ENCODE measurements at regions of chr7 and their contacts with region 1.

Region 1: DNA sequence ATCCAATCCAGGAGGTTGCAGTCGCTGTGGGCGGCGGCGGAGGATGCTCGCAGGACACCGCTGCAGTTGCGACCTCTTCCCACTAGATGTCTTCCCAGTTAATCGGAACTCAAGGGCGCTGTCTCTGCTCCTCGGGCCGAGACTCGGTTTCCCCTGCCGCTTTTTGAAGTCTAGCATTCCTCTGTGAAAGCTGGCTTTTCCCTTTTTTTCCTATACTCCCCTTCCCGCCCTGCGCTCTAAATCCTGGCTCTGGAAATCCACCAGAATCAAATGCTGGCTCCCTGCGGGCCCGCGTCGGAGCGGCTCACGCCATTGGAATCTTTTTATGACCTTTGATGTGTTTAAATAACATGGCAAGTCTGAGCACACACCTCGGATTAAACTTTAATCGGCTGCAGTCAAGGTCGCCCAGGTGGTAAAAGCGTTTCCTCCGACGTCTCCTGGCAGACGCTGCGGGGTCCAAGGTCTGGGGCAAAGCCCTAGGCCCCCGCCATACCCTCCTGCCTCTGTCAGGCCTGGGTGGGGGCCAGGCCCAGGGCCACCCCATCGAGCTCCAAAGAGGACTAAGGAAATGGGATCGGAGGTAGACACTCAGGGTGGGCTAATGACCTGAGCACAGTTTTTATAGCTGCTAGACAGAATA is 10.7 kb upstream of the HOXA13 start:
- DNase-seq: no peak
- ATAC-seq: peak; percentile 49
- H3K4me3 Mint-ChIP-seq: peak overlapping the region; percentile 64
- H3K27ac Mint-ChIP-seq: no peak overlapping the region
- H3K4me1 Mint-ChIP-seq: peaks cover 14% of the 10 kb centered on the region
- H3K27me3 Mint-ChIP-seq: peaks cover 75% of the 10 kb centered on the region
- CTCF ChIP-seq: no peak

Region 2: DNA sequence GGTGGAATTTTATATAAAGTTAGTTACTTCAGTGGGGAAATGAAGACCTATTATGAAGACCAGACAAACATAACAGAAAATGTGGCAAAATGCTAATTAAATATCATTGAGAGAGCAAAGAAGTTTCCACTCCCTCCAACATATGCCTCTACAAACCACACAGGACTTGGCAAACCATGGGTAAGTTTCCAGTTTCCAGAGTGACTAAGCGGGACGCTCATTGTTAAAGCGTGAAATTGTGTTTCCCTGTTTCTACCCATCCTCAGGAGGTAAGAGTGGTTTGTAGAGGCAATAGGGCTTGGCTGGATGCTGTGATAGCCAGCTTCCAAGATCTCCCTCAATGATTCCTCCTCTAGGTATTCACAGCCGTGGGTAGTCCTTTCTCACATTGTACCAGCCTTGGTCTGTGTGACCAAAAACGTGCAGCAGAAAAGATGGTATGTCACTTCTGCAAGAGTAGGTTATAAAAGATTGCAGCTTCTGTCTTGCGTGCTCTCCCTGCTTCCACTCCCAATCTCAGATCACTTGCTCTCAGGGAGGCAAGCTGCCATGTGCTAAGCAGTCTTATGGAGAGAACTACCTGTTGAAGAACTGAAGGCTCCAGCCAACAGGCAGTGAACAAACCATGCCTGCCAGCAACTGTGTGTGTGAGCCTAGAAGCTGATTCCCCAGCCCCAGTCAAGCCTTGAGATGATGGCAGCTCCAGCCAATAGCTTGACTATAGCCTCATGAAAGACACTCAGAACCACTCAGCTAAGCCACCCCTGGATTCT is 973.3 kb before region 1 on chr7:
- CTCF ChIA-PET with region 1: no interaction called
- POLR2A ChIA-PET with region 1: no interaction called
- intact Hi-C with region 1: no loop called
- DNase-seq: no peak
- ATAC-seq: no peak
- H3K4me3 Mint-ChIP-seq: no peak overlapping the region
- H3K27ac Mint-ChIP-seq: no peak overlapping the region
- H3K4me1 Mint-ChIP-seq: no peaks in the 10 kb centered on the region
- H3K27me3 Mint-ChIP-seq: peaks cover 1% of the 10 kb centered on the region
- CTCF ChIP-seq: no peak

Region 3: GRCh38 chr7:27160546-27161213 is 49.9 kb before region 1 on chr7:
- CTCF ChIA-PET with region 1: no interaction called
- POLR2A ChIA-PET with region 1: no interaction called
- intact Hi-C with region 1: no loop called
- DNase-seq: peak; percentile 83
- ATAC-seq: peak; percentile 87
- H3K4me3 Mint-ChIP-seq: peak overlapping the region; percentile 75
- H3K27ac Mint-ChIP-seq: no peak overlapping the region
- H3K4me1 Mint-ChIP-seq: peaks cover 31% of the 10 kb centered on the region
- H3K27me3 Mint-ChIP-seq: peaks cover 72% of the 10 kb centered on the region
- CTCF ChIP-seq: peak; percentile 97

Region 4: DNA sequence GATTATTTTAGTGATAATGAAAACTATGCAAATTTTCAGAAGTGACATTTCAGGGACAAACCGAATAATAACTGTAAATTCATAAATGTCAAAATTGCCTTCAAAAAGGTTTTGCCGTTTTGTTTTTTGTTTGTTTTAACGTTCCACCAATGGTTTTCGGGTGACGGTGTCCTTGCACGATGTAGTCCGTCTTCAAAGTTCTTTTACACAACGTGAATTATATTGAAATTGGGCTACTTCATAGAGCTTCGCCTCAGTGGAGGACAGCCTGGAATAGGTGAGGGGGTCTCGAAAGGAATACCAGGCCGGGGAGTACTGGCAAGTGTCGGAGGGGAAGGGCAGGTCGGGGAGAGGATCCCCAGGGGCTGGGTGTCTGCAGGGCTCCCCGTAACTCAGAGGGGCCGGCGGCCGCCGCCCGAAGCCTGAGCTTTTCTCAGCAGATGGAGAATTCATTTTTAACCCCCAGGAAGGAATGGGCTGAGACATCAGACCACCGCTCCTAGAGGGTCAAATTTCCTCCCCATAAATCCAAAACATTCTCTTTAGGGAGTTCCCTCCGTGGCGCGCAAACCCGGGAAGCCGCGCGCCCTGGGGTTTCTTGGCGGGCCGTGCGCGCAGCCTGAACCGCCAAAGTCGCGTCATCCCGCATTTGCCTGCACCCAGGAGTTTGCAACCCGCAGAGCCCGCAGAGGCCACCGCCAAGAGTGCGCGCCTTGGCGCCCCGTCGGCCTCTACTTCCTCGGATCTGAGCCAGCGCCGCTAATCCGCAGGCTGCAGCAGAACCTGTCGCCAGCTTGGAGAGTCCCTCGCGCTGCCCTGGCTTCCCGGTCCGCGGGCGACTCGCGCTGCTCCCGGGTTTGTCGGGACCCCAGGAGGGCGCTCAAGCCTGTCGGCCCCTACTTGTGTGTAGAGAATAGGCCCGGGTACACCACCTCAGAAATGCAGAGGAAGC is 14.7 kb after region 1 on chr7:
- CTCF ChIA-PET with region 1: interaction called, 4 read pairs
- POLR2A ChIA-PET with region 1: no interaction called
- intact Hi-C with region 1: loop called (anchors 2 kb)
- DNase-seq: no peak
- ATAC-seq: no peak
- H3K4me3 Mint-ChIP-seq: no peak overlapping the region
- H3K27ac Mint-ChIP-seq: no peak overlapping the region
- H3K4me1 Mint-ChIP-seq: peaks cover 10% of the 10 kb centered on the region
- H3K27me3 Mint-ChIP-seq: peaks cover 57% of the 10 kb centered on the region
- CTCF ChIP-seq: no peak

Region 5: GRCh38 chr7:27576360-27576944 is 365.9 kb after region 1 on chr7:
- CTCF ChIA-PET with region 1: interaction called, 8 read pairs
- POLR2A ChIA-PET with region 1: no interaction called
- intact Hi-C with region 1: loop called (anchors 1 kb)
- DNase-seq: no peak
- ATAC-seq: no peak
- H3K4me3 Mint-ChIP-seq: no peak overlapping the region
- H3K27ac Mint-ChIP-seq: no peak overlapping the region
- H3K4me1 Mint-ChIP-seq: no peaks in the 10 kb centered on the region
- H3K27me3 Mint-ChIP-seq: no peaks in the 10 kb centered on the region
- CTCF ChIP-seq: peak; percentile 26

Region 6: DNA sequence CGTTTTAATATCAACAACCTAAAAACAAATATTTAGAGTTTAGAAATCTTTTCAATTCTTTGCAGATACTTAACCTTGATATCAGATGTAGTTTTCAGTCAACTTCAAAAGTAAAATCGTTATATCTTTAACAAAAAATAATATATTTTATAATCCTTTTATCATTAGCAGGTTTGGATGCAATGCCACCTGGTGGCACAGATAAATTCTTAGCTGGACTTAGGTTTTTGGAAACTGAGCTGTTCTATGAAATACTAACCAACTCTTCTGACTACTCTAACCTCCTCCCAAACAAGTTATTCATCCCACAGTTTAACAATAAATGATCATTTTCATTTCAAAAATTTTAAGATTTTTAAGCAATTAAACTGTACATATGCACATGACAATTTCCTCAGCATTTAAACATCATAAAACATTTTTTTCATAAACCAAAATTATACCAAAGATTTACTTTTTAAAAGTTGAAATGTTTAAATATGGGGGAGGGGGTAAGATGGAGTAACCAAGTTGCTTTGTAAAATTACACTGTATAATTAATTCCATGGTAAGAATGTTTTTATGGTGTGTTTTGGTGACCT is 395.2 kb after region 1 on chr7:
- CTCF ChIA-PET with region 1: no interaction called
- POLR2A ChIA-PET with region 1: no interaction called
- intact Hi-C with region 1: loop called (anchors 1 kb)
- DNase-seq: no peak
- ATAC-seq: no peak
- H3K4me3 Mint-ChIP-seq: no peak overlapping the region
- H3K27ac Mint-ChIP-seq: no peak overlapping the region
- H3K4me1 Mint-ChIP-seq: no peaks in the 10 kb centered on the region
- H3K27me3 Mint-ChIP-seq: no peaks in the 10 kb centered on the region
- CTCF ChIP-seq: no peak

Region 7: DNA sequence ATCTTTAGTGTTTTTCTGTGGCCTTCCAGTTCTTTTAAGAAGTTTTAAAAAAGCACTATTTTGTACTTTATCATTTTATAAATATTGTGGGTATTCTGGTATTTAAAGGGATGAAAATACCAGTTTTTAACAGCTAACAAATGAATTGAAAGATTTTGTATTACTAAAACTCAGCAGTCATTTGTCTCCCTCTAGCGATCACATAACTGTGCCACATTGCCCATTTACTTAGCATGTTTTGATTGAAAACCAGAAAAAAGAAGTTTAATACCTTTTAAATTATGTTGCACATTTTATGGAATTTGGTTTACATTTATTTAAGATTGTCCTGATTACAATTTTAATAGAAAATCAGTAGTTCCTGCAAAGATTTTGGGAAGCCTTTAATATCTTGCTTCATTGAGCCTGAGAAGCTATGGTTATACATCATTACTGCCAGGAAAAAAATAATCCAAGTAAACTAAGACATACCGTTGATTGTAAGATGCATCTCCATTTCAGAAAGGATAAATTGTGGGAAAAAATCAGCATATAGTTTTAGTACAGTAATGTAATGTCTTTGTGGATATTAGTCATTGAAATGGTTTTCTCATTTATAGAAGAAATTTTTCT is 564.3 kb after region 1 on chr7:
- CTCF ChIA-PET with region 1: interaction called, 12 read pairs
- POLR2A ChIA-PET with region 1: no interaction called
- intact Hi-C with region 1: no loop called
- DNase-seq: no peak
- ATAC-seq: no peak
- H3K4me3 Mint-ChIP-seq: no peak overlapping the region
- H3K27ac Mint-ChIP-seq: no peak overlapping the region
- H3K4me1 Mint-ChIP-seq: no peaks in the 10 kb centered on the region
- H3K27me3 Mint-ChIP-seq: no peaks in the 10 kb centered on the region
- CTCF ChIP-seq: no peak

Region 8: DNA sequence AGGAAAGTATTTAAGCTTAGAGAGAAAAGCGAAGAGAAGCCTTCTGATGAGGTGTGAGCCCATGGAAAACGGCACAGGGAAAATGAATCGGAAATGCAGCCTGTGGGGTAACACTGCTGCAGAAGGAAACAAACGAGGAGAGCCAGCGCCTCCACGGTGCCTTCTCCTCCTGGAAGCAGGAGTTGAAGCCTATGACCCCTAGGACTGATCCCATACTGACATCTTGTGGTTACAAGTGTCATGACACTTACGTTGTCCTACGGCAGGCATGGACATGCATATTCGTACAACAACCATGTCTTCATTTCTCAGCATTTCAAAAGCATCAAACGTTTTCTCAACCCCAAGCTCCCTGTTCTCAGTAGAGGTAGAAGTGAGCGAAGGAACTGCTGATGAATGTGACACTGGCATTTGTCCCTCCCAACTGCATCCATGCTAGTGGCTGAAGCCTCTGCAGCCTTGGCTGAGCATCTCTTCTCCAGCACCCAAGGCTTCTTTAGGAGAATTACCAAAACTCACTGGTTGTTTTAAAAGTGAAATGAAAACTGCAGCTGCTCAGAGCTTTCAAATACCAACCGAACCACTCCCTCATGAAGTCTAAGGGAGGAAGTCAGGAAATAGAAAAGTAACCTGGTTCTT is 809.9 kb after region 1 on chr7:
- CTCF ChIA-PET with region 1: interaction called, 9 read pairs
- POLR2A ChIA-PET with region 1: no interaction called
- intact Hi-C with region 1: loop called (anchors 1 kb)
- DNase-seq: no peak
- ATAC-seq: peak; percentile 77
- H3K4me3 Mint-ChIP-seq: no peak overlapping the region
- H3K27ac Mint-ChIP-seq: no peak overlapping the region
- H3K4me1 Mint-ChIP-seq: peaks cover 9% of the 10 kb centered on the region
- H3K27me3 Mint-ChIP-seq: no peaks in the 10 kb centered on the region
- CTCF ChIP-seq: no peak

Region 9: GRCh38 chr7:28096713-28097112 is 886.2 kb after region 1 on chr7:
- CTCF ChIA-PET with region 1: no interaction called
- POLR2A ChIA-PET with region 1: no interaction called
- intact Hi-C with region 1: loop called (anchors 5 kb)
- DNase-seq: no peak
- ATAC-seq: no peak
- H3K4me3 Mint-ChIP-seq: no peak overlapping the region
- H3K27ac Mint-ChIP-seq: no peak overlapping the region
- H3K4me1 Mint-ChIP-seq: peaks cover 40% of the 10 kb centered on the region
- H3K27me3 Mint-ChIP-seq: no peaks in the 10 kb centered on the region
- CTCF ChIP-seq: peak; percentile 50

Measured in activated B cell treated with CpG ODN at 0.5 μM for 24 hours (primary cell).